CD4-positive, alpha-beta T cell (primary cell): ENCODE measurements at regions of chr6 and their contacts with region 1.

Region 1: GRCh38 chr6:42043787-42044475 is 6.4 kb upstream of the TAF8 start:
- DNase-seq: peak; percentile 88 to 96 (median 92)
- ATAC-seq: peak; percentile 31
- H3K4me3 ChIP-seq: peak overlapping the region; percentile 45
- H3K4me3 Mint-ChIP-seq: peak overlapping the region; percentile 87
- H3K27ac ChIP-seq: peak overlapping the region; percentile 5 to 57
- H3K27ac Mint-ChIP-seq: peak overlapping the region; percentile 89
- H3K4me1 ChIP-seq: peaks cover 86% of the 10 kb centered on the region
- H3K4me1 Mint-ChIP-seq: peaks cover 84% of the 10 kb centered on the region
- H3K27me3 ChIP-seq: no peaks in the 10 kb centered on the region
- H3K27me3 Mint-ChIP-seq: no peaks in the 10 kb centered on the region
- CTCF ChIP-seq: peak; percentile 89

Region 2: DNA sequence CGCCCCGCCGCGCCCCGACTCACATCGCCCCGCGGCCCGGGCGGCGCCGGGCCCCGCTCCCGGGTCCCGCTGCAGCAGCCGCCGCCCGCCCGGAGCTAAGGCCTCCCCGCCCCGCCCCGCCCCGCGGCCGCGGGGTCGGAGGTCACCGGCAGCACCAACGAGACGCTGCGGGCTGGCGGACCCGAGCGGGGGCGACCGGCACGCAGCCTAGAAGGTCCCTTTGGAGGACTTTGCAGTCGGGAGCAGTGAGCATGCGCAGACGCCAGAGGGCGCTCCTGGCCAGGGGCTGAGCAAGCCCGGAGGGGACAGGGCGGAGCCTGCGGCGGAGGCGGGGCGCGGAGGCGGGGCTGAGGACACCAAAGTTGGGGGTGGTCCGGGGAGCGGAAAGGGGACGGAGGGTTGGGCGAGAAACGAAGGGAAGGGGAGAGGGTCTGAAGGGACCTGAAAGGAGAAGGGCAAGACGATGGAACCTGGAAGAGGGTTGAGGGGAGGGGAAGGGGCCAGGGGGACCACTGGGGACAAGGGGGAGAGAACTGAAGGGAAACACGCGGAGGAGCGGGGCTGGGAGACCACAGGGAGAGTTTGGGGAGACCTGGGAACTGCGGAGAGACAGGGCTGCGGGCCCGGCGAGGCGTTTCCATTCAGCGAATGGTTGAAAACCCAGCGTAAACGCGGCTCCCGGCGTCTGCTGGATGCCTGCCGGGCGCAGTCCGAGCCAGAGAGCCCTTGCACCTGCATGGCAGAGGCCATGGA is 264.0 kb before region 1 on chr6 and contains the start of gene FRS3:
- CTCF ChIA-PET with region 1: interaction called, 5 read pairs
- POLR2A ChIA-PET with region 1: interaction called, 3 read pairs
- intact Hi-C with region 1: loop called in 1 of 2 experiments (anchors 1 kb)
- DNase-seq: peak; percentile 95 to 100 (median 99)
- ATAC-seq: peak; percentile 97
- H3K4me3 ChIP-seq: peak within 1 kb of the TSS; percentile 75
- H3K4me3 Mint-ChIP-seq: peak within 1 kb of the TSS; percentile 99
- H3K27ac ChIP-seq: no peak within 1 kb of the TSS
- H3K27ac Mint-ChIP-seq: peak within 1 kb of the TSS; percentile 68
- H3K4me1 ChIP-seq: peaks cover 24% of the 10 kb centered on the region
- H3K4me1 Mint-ChIP-seq: peaks cover 25% of the 10 kb centered on the region
- H3K27me3 ChIP-seq: peaks cover 7 to 8% of the 10 kb centered on the region in 2 experiments
- H3K27me3 Mint-ChIP-seq: peaks cover 11% of the 10 kb centered on the region
- CTCF ChIP-seq: peak; percentile 75
- total RNA-seq, gene FRS3: 4.6 to 5.4 TPM

Region 3: GRCh38 chr6:41895300-41896233 is 148.4 kb before region 1 on chr6 and contains the start of gene USP49:
- CTCF ChIA-PET with region 1: interaction called, 5 read pairs
- POLR2A ChIA-PET with region 1: interaction called, 9 read pairs
- intact Hi-C with region 1: loop called (anchors 1 to 2 kb)
- DNase-seq: peak; percentile 79 to 96 (median 88)
- ATAC-seq: peak; percentile 93
- H3K4me3 ChIP-seq: peak within 1 kb of the TSS; percentile 84
- H3K4me3 Mint-ChIP-seq: no peak within 1 kb of the TSS
- H3K27ac ChIP-seq: peak within 1 kb of the TSS; percentile 77 to 80
- H3K27ac Mint-ChIP-seq: no peak within 1 kb of the TSS
- H3K4me1 ChIP-seq: peaks cover 21% of the 10 kb centered on the region
- H3K4me1 Mint-ChIP-seq: peaks cover 12% of the 10 kb centered on the region
- H3K27me3 ChIP-seq: no peaks in the 10 kb centered on the region
- H3K27me3 Mint-ChIP-seq: no peaks in the 10 kb centered on the region
- CTCF ChIP-seq: no peak
- total RNA-seq, gene USP49: 1.3 TPM

Region 4: GRCh38 chr6:41936073-41936837 is 107.7 kb before region 1 on chr6:
- CTCF ChIA-PET with region 1: interaction called, 24 read pairs
- POLR2A ChIA-PET with region 1: interaction called, 168 read pairs
- intact Hi-C with region 1: loop called (anchors 1 kb)
- DNase-seq: peak; percentile 32 to 95 (median 54)
- ATAC-seq: peak; percentile 53
- H3K4me3 ChIP-seq: peak overlapping the region; percentile 21
- H3K4me3 Mint-ChIP-seq: peak overlapping the region; percentile 85
- H3K27ac ChIP-seq: peak overlapping the region; percentile 63 to 64
- H3K27ac Mint-ChIP-seq: peak overlapping the region; percentile 93
- H3K4me1 ChIP-seq: peaks cover 73% of the 10 kb centered on the region
- H3K4me1 Mint-ChIP-seq: peaks cover 75% of the 10 kb centered on the region
- H3K27me3 ChIP-seq: no peaks in the 10 kb centered on the region
- H3K27me3 Mint-ChIP-seq: no peaks in the 10 kb centered on the region
- CTCF ChIP-seq: peak; percentile 77

Region 5: DNA sequence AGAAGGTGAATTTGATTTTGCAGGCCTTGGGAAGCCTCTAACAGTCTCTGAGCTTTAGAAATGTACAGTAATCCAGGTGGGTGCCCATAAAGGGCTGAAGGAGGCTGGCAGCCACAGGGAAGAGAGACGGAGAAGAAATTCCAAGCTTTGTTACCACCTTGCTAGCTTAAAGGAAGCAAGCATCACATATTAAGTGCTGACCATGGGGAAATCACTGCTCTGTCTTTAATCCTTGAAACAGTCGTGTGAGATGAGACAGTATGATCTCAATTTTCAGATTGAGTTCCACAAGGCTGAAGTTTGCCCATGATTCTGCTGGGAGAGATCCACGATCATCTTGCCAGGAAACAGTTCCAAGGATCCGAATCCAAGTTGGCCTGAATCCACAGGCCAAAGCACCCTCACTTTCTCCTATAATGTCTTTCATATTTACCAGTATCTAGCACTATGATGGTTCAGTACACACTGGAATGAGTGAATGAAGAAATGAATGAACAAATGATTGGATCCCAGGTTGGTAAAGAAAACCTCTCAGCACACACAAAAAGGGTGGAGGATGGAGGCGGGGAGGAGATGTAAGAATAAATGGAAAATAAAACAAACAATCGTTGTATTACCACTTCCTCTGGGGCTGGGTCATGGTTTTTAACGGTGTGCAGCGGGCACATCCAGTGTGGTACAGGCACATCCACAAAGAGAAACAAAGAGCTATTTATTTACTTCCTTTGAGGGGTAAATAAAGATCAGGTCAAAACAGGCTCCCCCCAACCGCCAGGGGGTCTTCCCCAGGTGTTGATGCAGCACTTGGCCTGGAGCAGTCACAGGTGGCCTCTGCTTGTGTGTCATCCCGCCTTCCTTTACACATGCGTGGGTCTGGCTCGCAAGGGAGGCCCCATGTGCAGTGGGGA is 21.8 kb before region 1 on chr6:
- CTCF ChIA-PET with region 1: interaction called, 8 read pairs
- POLR2A ChIA-PET with region 1: interaction called, 43 read pairs
- intact Hi-C with region 1: loop called (anchors 2 kb)
- DNase-seq: peak; percentile 31 to 87 (median 61)
- ATAC-seq: peak; percentile 85
- H3K4me3 ChIP-seq: peak overlapping the region; percentile 17
- H3K4me3 Mint-ChIP-seq: peak overlapping the region; percentile 78
- H3K27ac ChIP-seq: peak overlapping the region; percentile 48 to 78
- H3K27ac Mint-ChIP-seq: peak overlapping the region; percentile 94
- H3K4me1 ChIP-seq: peaks cover 87% of the 10 kb centered on the region
- H3K4me1 Mint-ChIP-seq: peaks cover 71% of the 10 kb centered on the region
- H3K27me3 ChIP-seq: no peaks in the 10 kb centered on the region
- H3K27me3 Mint-ChIP-seq: no peaks in the 10 kb centered on the region
- CTCF ChIP-seq: no peak

Region 6: GRCh38 chr6:42217519-42218367 is 173.8 kb after region 1 on chr6 and contains the start of gene MRPS10:
- CTCF ChIA-PET with region 1: interaction called, 5 read pairs
- POLR2A ChIA-PET with region 1: no interaction called
- intact Hi-C with region 1: loop called in 1 of 2 experiments (anchors 10 kb)
- DNase-seq: peak; percentile 84 to 96 (median 86)
- ATAC-seq: peak; percentile 98
- H3K4me3 ChIP-seq: peak within 1 kb of the TSS; percentile 77
- H3K4me3 Mint-ChIP-seq: peak within 1 kb of the TSS; percentile 97
- H3K27ac ChIP-seq: peak within 1 kb of the TSS; percentile 60 to 65
- H3K27ac Mint-ChIP-seq: peak within 1 kb of the TSS; percentile 92
- H3K4me1 ChIP-seq: peaks cover 26% of the 10 kb centered on the region
- H3K4me1 Mint-ChIP-seq: peaks cover 23% of the 10 kb centered on the region
- H3K27me3 ChIP-seq: no peaks in the 10 kb centered on the region
- H3K27me3 Mint-ChIP-seq: no peaks in the 10 kb centered on the region
- CTCF ChIP-seq: no peak
- total RNA-seq, gene MRPS10: 17.1 to 18.4 TPM